Activated CD4-positive, alpha-beta memory T cell treated with anti-CD3 and anti-CD28 coated beads for 36 hours (primary cell): ENCODE measurements at regions of chr2 and their contacts with region 1.

Region 1: GRCh38 chr2:131492418-131493198 is 411 bp upstream of the MZT2A start:
- DNase-seq: peak; percentile 96
- H3K4me3 Mint-ChIP-seq: peak overlapping the region; percentile 98
- H3K27ac Mint-ChIP-seq: peak overlapping the region; percentile 95
- H3K4me1 Mint-ChIP-seq: peaks cover 43% of the 10 kb centered on the region
- H3K27me3 Mint-ChIP-seq: no peaks in the 10 kb centered on the region

Region 2: GRCh38 chr2:130824492-130825061 is 668.0 kb before region 1 on chr2:
- CTCF ChIA-PET with region 1: no interaction called
- POLR2A ChIA-PET with region 1: no interaction called
- intact Hi-C with region 1: loop called (anchors 10 kb)
- DNase-seq: peak; percentile 83
- H3K4me3 Mint-ChIP-seq: peak overlapping the region; percentile 39
- H3K27ac Mint-ChIP-seq: peak overlapping the region; percentile 90
- H3K4me1 Mint-ChIP-seq: peaks cover 21% of the 10 kb centered on the region
- H3K27me3 Mint-ChIP-seq: no peaks in the 10 kb centered on the region

Region 3: DNA sequence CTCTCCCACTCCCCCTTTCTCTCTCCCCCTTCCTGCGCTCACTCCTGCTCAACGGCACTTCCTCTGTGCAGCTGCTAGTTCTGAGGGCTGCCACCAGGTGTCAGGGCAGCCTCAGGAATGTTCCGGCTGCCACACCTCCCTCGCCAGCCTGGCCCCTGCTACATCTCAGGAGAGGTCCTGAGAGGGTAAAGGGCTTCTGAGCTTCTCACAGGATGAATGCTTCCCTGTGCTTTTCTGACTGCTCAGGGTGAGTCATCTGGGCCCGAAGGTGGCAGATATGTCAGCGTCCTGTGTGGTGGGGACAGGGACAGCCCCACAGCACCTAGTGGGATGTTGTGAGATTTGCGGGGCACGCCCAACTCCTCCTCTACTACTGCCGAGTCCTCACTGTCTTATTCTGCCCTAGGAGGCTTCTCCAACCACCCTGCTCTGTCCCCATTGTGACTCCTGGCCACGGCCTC is 338.5 kb before region 1 on chr2:
- CTCF ChIA-PET with region 1: interaction called, 27 read pairs
- POLR2A ChIA-PET with region 1: no interaction called
- intact Hi-C with region 1: loop called (anchors 1 kb)
- DNase-seq: peak; percentile 93
- H3K4me3 Mint-ChIP-seq: no peak overlapping the region
- H3K27ac Mint-ChIP-seq: no peak overlapping the region
- H3K4me1 Mint-ChIP-seq: peaks cover 27% of the 10 kb centered on the region
- H3K27me3 Mint-ChIP-seq: no peaks in the 10 kb centered on the region

Region 4: GRCh38 chr2:131425231-131425941 is 67.2 kb before region 1 on chr2:
- CTCF ChIA-PET with region 1: interaction called, 6 read pairs
- POLR2A ChIA-PET with region 1: no interaction called
- intact Hi-C with region 1: loop called (anchors 5 kb)
- DNase-seq: no peak
- H3K4me3 Mint-ChIP-seq: peak overlapping the region; percentile 16
- H3K27ac Mint-ChIP-seq: no peak overlapping the region
- H3K4me1 Mint-ChIP-seq: peaks cover 9% of the 10 kb centered on the region
- H3K27me3 Mint-ChIP-seq: peaks cover 51% of the 10 kb centered on the region

Region 5: DNA sequence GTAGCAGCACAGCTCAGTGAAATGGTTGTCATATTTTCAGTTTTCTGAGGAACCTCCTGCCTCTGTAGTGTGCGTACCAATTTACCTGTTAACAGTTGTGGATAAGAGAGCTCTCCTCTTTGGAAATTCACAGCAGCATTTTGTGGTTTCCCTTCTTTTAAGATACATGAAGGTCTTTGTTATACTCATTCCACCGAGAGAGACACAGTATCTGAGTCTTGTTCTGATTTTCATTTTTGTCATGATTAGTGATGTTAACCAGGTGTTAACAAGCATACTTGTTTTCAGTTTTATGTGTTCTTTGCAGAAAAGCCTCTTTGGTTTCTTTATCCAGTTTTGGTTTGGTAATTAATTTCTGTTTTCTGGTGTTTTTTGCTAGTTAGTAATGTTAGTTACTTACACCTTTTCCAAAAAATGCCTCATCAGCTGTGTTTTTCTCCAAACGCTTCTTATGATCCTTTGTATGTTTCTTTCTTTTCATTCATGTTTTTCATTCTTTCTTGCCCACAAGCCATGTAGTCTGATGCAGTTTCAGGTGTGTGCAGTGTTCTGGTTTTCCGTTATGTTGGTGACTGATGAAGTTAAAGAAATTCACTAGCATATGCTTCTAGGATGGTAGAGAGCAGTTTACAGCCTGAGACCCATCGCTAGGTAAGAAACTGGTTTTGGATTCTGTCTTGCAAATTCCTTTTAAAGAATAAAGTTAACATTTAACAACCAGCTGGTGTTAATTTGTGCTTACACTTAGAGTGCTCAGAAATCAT is 65.1 kb after region 1 on chr2:
- CTCF ChIA-PET with region 1: no interaction called
- POLR2A ChIA-PET with region 1: no interaction called
- intact Hi-C with region 1: no loop called
- DNase-seq: no peak
- H3K4me3 Mint-ChIP-seq: no peak overlapping the region
- H3K27ac Mint-ChIP-seq: no peak overlapping the region
- H3K4me1 Mint-ChIP-seq: no peaks in the 10 kb centered on the region
- H3K27me3 Mint-ChIP-seq: peaks cover 33% of the 10 kb centered on the region

Region 6: DNA sequence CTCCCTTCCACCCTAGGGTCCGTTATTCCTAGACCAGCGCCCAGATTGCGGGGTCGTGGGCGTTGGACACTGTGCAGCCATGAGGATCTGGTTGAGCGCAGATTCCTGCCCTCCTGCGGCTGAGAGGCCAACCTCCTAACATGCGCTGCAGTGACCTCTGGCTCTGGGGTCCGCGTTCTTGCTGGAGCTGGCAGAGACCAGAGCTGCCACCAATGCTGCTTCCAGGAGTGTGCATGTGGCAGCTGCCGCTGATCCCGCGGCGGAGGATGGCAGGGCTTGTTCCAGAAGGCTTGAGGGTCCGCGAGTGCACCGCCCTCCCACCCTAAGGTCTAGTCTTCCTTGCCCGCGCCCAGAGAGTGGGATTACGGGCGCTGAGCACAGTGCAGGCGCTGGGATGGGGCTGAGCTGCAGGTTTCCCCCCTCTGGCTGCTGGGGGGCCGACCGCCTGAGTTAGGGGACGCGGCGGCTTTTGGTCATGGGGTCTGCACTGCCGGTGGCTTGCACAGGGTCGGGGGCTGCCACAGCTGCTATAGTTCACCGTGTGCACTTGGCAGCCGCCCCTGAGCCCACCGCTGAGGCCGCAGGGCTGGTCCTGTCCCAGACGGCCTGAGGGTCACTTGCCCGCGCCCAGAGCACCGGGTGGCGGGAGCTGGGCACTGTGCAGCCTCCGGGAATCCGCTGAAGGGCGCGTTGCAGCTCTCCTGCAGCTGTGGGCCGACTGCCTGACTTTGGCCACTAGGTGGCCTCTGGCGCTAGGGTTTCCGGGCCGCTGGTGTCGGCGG is 181.0 kb after region 1 on chr2:
- CTCF ChIA-PET with region 1: interaction called, 5 read pairs
- POLR2A ChIA-PET with region 1: no interaction called
- intact Hi-C with region 1: loop called (anchors 5 kb)
- DNase-seq: peak; percentile 82
- H3K4me3 Mint-ChIP-seq: peak overlapping the region; percentile 20
- H3K27ac Mint-ChIP-seq: no peak overlapping the region
- H3K4me1 Mint-ChIP-seq: peaks cover 2% of the 10 kb centered on the region
- H3K27me3 Mint-ChIP-seq: peaks cover 27% of the 10 kb centered on the region